ENCODE measurements at regions of chr4 and their contacts with region 1.

Region 1: DNA sequence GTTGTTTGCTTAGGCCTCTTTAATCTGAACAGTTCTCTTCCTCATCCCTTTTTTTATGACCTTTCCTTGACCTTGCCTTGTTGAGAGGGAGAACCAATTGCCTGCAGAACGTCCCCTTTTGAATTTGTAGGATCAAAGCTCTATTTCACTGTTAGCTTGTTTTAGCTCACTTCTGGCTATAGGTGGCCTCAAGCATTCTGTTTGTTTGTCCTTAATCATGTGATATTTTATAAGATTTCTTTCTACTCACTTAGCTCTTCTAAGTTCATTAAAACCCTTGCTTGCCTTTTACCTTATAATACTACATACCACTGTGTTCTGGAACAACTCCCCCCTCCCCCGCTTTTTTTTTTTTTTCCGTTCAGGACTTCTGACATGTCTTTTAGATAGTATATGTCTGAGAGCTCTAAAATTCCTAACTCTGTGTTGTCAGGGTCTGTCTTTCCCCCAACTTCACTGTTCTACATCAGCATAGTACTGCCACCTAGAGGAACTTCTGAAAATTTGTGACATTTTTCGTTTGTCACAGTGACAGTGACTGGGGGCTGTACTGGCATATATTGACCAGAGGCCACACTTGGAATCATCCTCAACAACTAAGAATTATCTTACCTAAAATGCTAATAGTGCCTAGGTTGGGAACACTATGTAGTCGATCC is 128.5 kb downstream of the LARP7 start:
- DNase-seq: peak; percentile 71
- H3K4me3 ChIP-seq: no peak overlapping the region; a peak in 1 of 4 replicates
- H3K27ac ChIP-seq: no peak overlapping the region
- H3K4me1 ChIP-seq: no peaks in the 10 kb centered on the region
- H3K27me3 ChIP-seq: no peaks in the 10 kb centered on the region
- CTCF ChIP-seq: peak; percentile 65
- EP300 ChIP-seq: no peak
- RAD21 ChIP-seq: peak; percentile 76

Region 2: GRCh38 chr4:112636688-112637551 is 128.5 kb before region 1 on chr4 and contains the starts of genes LARP7 and ZGRF1:
- CTCF ChIA-PET with region 1: interaction called, 105 read pairs
- POLR2A ChIA-PET with region 1: no interaction called
- DNase-seq: peak; percentile 86
- H3K4me3 ChIP-seq: peak within 1 kb of the TSS; percentile 82 to 98
- H3K27ac ChIP-seq: peak within 1 kb of the TSS; percentile 96 to 97
- H3K4me1 ChIP-seq: peaks cover 10 to 12% of the 10 kb centered on the region in 2 experiments; a peak in 3 of 4 replicates
- H3K27me3 ChIP-seq: no peaks in the 10 kb centered on the region
- CTCF ChIP-seq: peak; percentile 88
- EP300 ChIP-seq: no peak; a peak in 1 of 4 replicates
- RAD21 ChIP-seq: peak; percentile 47; the same call in 1 of the 2 replicates
- polyA plus RNA-seq, gene LARP7: 9.4 and 10.5 TPM in 2 replicates
- polyA plus RNA-seq, gene ZGRF1: 2.4 and 2.9 TPM in 2 replicates

Region 3: DNA sequence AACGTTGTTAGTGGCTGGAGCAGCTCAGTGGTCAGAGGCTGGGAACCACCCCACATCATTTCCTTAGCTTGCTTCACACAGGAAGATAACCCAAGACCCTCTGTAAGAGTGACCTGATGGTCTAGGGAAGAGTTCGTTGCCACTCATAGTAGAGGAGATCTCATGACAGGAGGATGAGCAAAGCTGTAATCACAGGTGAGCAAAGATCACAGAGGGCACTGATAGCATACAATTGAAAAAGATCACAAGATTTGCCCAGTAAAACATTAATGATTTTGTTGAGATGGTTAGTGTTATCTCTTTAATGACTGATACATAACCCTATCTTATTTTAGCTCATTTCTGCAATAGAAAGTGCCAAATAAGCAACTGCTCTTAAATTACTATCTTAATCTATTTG is 84.5 kb before region 1 on chr4:
- CTCF ChIA-PET with region 1: no interaction called
- POLR2A ChIA-PET with region 1: no interaction called
- DNase-seq: no peak
- H3K4me3 ChIP-seq: no peak overlapping the region
- H3K27ac ChIP-seq: no peak overlapping the region
- H3K4me1 ChIP-seq: no peaks in the 10 kb centered on the region
- H3K27me3 ChIP-seq: no peaks in the 10 kb centered on the region
- CTCF ChIP-seq: no peak
- EP300 ChIP-seq: no peak
- RAD21 ChIP-seq: no peak

Region 4: DNA sequence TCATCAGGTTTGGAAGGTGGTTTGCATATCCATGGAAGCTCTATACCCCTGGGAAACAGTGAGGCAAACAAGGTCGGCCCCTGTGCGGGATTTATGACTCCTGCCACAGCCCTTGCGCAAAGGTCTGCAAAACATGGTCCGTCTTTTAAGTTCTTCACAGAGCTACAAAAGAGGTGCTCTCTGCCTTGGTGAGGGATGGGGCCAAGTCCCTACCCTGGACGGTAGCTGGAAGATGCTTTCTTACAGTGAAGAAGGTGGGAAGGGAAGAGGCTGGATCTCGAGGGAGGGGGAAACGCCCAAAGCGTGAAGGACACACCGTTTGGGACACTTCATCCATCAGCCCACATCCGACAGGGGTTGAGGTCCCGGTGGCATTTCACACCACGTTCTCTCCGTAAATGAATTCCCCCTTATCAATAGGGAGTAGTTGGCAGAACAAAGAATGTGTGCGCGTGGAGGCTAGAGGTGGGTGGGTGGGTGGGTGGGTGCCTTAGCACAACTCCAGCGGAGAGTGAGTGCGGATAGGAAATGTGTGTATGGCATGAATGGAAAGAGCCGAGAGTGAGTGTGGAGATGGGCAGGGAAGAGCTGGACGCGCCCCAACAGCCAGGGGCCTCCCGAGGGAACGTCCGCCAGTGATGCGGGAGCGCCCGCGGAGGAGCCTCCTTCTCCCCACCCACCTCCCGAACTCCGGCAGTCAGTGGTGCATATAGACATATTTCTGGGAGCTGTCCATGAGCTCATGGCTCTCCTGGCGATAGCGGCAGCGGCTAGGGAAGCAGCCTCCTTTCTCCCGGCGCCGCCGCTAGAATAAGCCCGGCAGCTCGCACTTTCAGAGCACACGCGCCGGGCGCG is 60.2 kb before region 1 on chr4:
- CTCF ChIA-PET with region 1: interaction called, 10 read pairs
- POLR2A ChIA-PET with region 1: interaction called, 3 read pairs
- DNase-seq: peak; percentile 82
- H3K4me3 ChIP-seq: peak overlapping the region; percentile 26 to 48; a peak in 3 of 4 replicates
- H3K27ac ChIP-seq: peak overlapping the region in 1 of 2 experiments; percentile 51; a peak in 1 of 4 replicates
- H3K4me1 ChIP-seq: peaks cover 0 to 4% of the 10 kb centered on the region in 2 experiments; a peak in 2 of 4 replicates
- H3K27me3 ChIP-seq: peaks cover 19% of the 10 kb centered on the region
- CTCF ChIP-seq: no peak
- EP300 ChIP-seq: no peak
- RAD21 ChIP-seq: no peak

Region 5: GRCh38 chr4:112775801-112776200 is 10.4 kb after region 1 on chr4:
- CTCF ChIA-PET with region 1: interaction called, 33 read pairs
- POLR2A ChIA-PET with region 1: no interaction called
- DNase-seq: no peak
- H3K4me3 ChIP-seq: no peak overlapping the region
- H3K27ac ChIP-seq: no peak overlapping the region
- H3K4me1 ChIP-seq: no peaks in the 10 kb centered on the region
- H3K27me3 ChIP-seq: no peaks in the 10 kb centered on the region
- CTCF ChIP-seq: no peak
- EP300 ChIP-seq: no peak
- RAD21 ChIP-seq: no peak

Region 6: DNA sequence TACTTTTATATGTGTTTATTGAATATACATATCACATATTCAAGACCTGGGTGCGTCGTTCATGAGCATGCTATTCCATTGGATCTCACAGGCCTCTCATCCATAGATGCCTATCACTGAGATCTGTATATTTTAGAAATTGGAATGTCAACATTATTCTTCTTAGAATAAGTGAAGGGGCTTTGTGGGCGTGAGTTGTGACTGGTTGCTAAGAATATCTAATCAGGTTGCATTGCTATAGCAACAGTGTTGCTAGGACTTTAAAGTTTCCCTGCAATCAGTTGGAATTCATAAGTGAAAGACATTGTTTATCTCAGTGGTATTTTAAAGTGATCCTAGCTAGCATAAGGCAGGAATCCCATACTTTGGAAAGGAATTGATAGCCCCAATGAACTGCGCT is 247.3 kb after region 1 on chr4:
- CTCF ChIA-PET with region 1: no interaction called
- POLR2A ChIA-PET with region 1: no interaction called
- DNase-seq: peak; percentile 15
- H3K4me3 ChIP-seq: no peak overlapping the region
- H3K27ac ChIP-seq: peak overlapping the region in 1 of 2 experiments; percentile 83; a peak in 2 of 4 replicates
- H3K4me1 ChIP-seq: peaks cover 0 to 22% of the 10 kb centered on the region in 2 experiments; a peak in 2 of 4 replicates
- H3K27me3 ChIP-seq: no peaks in the 10 kb centered on the region
- CTCF ChIP-seq: no peak
- EP300 ChIP-seq: no peak
- RAD21 ChIP-seq: no peak